Activated T-helper 2 cell treated with anti-CD3 and anti-CD28 coated beads, Interferon-gamma antibody, Interleukin-2, Interleukin-4, amounts not matched to agents 10 μg/mL and 5 μg/mL and 100 μg/mL, durations not matched to agents 14 hours and 24 hours and 36 hours (primary cell): ENCODE measurements at regions of chr6 and their contacts with region 1.

Region 1: DNA sequence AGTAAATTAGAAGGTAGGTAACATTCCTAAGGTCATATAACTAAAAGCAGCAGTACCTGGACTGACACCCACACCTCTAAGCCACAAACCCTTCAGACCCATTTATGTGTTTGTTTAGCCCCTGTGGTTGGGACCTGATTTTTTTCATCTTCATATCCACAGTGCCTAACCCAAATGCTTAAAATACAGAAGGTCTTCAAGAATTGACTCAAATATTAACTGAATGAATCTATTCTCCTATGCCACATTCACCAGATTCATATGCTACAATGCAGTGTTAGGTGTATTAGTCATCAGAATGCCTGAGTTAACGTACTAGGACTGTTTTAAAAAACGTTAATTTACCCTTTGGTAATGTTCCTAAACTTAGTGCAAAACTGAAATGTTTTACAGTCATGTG is 124.8 kb downstream of the AHI1 start:
- DNase-seq: no peak
- H3K4me3 Mint-ChIP-seq: no peak overlapping the region
- H3K27ac Mint-ChIP-seq: no peak overlapping the region
- H3K4me1 Mint-ChIP-seq: peaks cover 2% of the 10 kb centered on the region
- H3K27me3 Mint-ChIP-seq: no peaks in the 10 kb centered on the region

Region 2: DNA sequence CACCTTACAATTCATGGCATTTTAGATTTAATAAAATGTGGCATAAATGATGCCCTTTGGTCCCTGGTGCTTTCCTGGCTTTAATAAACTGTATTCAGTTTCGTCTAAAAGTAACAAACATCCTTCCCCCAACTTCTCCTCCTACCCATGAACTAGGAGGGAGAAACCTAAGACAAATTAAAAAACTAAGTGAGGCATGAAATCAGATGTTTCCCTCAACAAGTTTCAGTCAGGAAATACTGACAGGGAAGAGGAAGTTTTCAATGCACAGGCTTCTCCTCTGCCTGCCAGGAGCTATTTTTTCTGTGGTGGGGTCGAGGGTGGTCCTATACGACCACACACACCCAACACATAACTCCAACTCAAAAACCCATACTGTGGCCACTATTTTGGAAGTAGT is 328.1 kb before region 1 on chr6:
- intact Hi-C with region 1: no loop called
- DNase-seq: no peak
- H3K4me3 Mint-ChIP-seq: no peak overlapping the region
- H3K27ac Mint-ChIP-seq: no peak overlapping the region
- H3K4me1 Mint-ChIP-seq: peaks cover 46% of the 10 kb centered on the region
- H3K27me3 Mint-ChIP-seq: no peaks in the 10 kb centered on the region

Region 3: DNA sequence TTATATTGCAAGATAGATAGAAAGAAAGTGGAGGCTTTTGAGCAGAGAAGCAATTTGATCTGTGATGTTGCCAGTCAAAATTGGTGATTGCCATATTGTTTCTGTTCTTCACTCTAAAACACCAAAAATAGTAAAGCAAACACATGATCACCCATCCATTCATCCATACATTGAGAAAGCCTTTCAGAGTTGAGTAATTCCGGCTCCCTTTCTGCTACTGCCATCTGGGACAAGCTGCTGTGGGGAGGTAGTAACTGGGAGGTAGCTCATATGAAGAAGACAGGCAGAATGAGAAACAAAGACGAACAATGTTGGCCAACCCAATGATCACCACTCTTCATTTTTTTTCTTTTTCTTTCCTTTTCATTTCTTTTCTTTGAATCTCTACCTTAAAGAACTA is 267.0 kb before region 1 on chr6:
- intact Hi-C with region 1: no loop called
- DNase-seq: no peak
- H3K4me3 Mint-ChIP-seq: no peak overlapping the region
- H3K27ac Mint-ChIP-seq: no peak overlapping the region
- H3K4me1 Mint-ChIP-seq: peaks cover 41% of the 10 kb centered on the region
- H3K27me3 Mint-ChIP-seq: no peaks in the 10 kb centered on the region

Region 4: DNA sequence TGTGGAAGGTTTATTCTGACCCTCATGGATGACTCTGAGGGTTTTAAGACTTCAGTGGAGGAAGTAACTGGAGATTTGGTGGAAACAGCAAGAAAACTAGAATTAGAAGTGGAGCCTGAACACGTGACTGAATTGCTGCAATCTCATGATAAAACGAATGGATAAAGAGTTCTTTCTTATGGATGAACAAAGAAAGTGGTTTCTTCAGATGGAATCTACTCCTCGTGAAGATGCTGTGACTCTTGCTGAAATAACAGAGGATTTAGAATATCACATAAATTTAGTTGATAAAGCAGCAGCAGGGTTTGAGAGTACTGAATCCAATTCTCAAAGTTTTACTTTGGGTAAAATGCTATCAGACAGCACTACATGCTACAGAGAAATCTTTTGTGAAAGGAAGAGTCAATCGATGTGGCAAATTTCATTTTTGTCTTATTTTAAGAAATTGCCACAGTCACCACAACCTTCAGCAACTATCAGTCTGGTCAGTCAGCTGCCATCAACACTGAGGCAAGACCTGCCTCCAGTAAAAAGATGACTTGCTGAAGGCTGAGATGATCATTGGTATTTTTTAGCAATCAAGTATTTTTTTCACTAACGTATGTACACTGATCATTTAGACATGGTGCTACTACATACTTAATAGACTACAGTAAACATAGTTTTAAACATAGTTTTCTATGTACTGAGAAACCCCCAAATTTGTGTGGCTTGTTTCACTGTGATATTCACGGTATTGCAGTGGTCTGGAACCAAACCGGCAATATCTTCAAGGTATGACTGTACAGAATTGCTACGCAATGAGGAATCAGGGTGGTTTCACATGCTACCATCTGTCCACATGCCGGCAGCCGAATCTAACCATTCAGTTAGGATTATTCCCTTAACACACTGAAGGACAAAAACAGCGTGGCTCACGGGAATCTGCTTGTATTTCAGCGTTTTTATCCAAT is 42.6 kb before region 1 on chr6:
- intact Hi-C with region 1: loop called (anchors 5 kb)
- DNase-seq: no peak
- H3K4me3 Mint-ChIP-seq: no peak overlapping the region
- H3K27ac Mint-ChIP-seq: no peak overlapping the region
- H3K4me1 Mint-ChIP-seq: peaks cover 20% of the 10 kb centered on the region
- H3K27me3 Mint-ChIP-seq: no peaks in the 10 kb centered on the region

Region 5: GRCh38 chr6:135423649-135424128 is 50.9 kb after region 1 on chr6:
- intact Hi-C with region 1: no loop called
- DNase-seq: no peak
- H3K4me3 Mint-ChIP-seq: no peak overlapping the region
- H3K27ac Mint-ChIP-seq: peak overlapping the region; percentile 38
- H3K4me1 Mint-ChIP-seq: peaks cover 32% of the 10 kb centered on the region
- H3K27me3 Mint-ChIP-seq: no peaks in the 10 kb centered on the region

Region 6: GRCh38 chr6:135630789-135631376 is 258.1 kb after region 1 on chr6:
- intact Hi-C with region 1: no loop called
- DNase-seq: no peak
- H3K4me3 Mint-ChIP-seq: no peak overlapping the region
- H3K27ac Mint-ChIP-seq: peak overlapping the region; percentile 78
- H3K4me1 Mint-ChIP-seq: peaks cover 60% of the 10 kb centered on the region
- H3K27me3 Mint-ChIP-seq: no peaks in the 10 kb centered on the region